ENCODE measurements at regions of chr6 and their contacts with region 1.

Region 1: DNA sequence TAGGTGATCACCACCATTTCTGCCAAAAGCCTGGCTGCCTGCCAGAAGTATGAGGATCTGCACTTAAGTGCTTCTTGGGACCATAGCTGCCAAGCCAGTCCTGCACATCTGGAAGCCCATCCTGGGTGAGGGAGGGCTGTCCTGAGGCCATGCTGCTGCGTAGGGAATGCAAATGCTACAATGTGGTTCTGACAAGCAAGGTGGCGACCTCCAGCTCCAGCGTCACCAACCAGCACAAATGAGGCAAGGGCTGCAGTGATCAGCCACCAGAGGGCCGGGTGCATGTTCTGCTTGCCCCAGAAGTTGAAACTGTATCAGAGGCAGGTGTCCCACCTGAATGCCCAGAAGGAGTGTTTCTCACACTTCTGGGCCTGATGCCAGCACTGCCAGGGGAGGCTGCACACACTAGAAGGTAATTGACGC is 99.1 kb upstream of the KCNQ5 start:
- DNase-seq: peak; percentile 36 to 70
- H3K4me3 ChIP-seq: no peak overlapping the region
- H3K27ac ChIP-seq: no peak overlapping the region
- H3K4me1 ChIP-seq: 0 out of 7 replicates have a peak, but pooled peaks cover 0 to 2% (median 0%) of the 10 kb centered on the region in 4 experiments
- H3K27me3 ChIP-seq: no peaks in the 10 kb centered on the region
- CTCF ChIP-seq: peak; percentile 81 to 98 (median 93)
- EP300 ChIP-seq: no peak
- POLR2A ChIP-seq: no peak
- RAD21 ChIP-seq: peak; percentile 68 to 76

Region 2: DNA sequence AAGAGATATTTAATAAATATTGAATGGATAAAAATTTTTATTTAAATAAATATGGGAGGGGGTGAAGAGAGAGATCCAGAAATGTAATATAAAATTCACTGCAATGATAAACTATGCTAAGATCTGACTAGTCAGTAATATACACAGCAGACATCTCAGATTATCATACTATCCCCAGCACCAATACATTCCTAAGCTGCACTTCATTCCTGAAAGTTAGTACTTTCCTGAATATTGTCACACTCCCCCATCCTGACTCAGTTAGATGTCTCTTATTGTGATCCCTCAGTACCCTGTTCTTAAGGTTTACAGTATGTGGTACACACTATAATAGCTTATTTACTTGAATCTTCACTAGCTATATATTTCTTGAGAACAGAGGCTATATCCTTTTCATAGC is 10.9 kb after region 1 on chr6:
- CTCF ChIA-PET with region 1: interaction called, 33 read pairs
- POLR2A ChIA-PET with region 1: no interaction called
- DNase-seq: no peak
- H3K4me3 ChIP-seq: no peak overlapping the region
- H3K27ac ChIP-seq: no peak overlapping the region
- H3K4me1 ChIP-seq: no peaks in the 10 kb centered on the region
- H3K27me3 ChIP-seq: no peaks in the 10 kb centered on the region
- CTCF ChIP-seq: no peak
- EP300 ChIP-seq: no peak
- POLR2A ChIP-seq: no peak
- RAD21 ChIP-seq: no peak

Region 3: GRCh38 chr6:72547020-72547419 is 24.3 kb after region 1 on chr6:
- CTCF ChIA-PET with region 1: interaction called, 16 read pairs
- POLR2A ChIA-PET with region 1: no interaction called
- DNase-seq: no peak
- H3K4me3 ChIP-seq: no peak overlapping the region
- H3K27ac ChIP-seq: no peak overlapping the region
- H3K4me1 ChIP-seq: no peaks in the 10 kb centered on the region
- H3K27me3 ChIP-seq: no peaks in the 10 kb centered on the region
- CTCF ChIP-seq: no peak
- EP300 ChIP-seq: no peak
- POLR2A ChIP-seq: no peak
- RAD21 ChIP-seq: no peak

Region 4: GRCh38 chr6:72553531-72554511 is 31.1 kb after region 1 on chr6:
- CTCF ChIA-PET with region 1: interaction called, 10 read pairs
- POLR2A ChIA-PET with region 1: no interaction called
- DNase-seq: no peak
- H3K4me3 ChIP-seq: no peak overlapping the region
- H3K27ac ChIP-seq: no peak overlapping the region
- H3K4me1 ChIP-seq: peaks cover 0 to 20% (median 0%) of the 10 kb centered on the region in 4 experiments; a peak in 3 of 7 replicates
- H3K27me3 ChIP-seq: no peaks in the 10 kb centered on the region
- CTCF ChIP-seq: no peak
- EP300 ChIP-seq: no peak
- POLR2A ChIP-seq: no peak
- RAD21 ChIP-seq: no peak

Region 5: GRCh38 chr6:72580281-72580940 is 57.7 kb after region 1 on chr6:
- CTCF ChIA-PET with region 1: interaction called, 31 read pairs
- POLR2A ChIA-PET with region 1: no interaction called
- DNase-seq: peak in 1 of 2 experiments; percentile 9
- H3K4me3 ChIP-seq: no peak overlapping the region
- H3K27ac ChIP-seq: no peak overlapping the region
- H3K4me1 ChIP-seq: no peaks in the 10 kb centered on the region
- H3K27me3 ChIP-seq: no peaks in the 10 kb centered on the region
- CTCF ChIP-seq: peak in 2 of 3 experiments; percentile 62 to 83; a peak in 3 of 4 replicates
- EP300 ChIP-seq: no peak
- POLR2A ChIP-seq: no peak
- RAD21 ChIP-seq: peak; percentile 90 to 92

Measured in H1 (cell line).